Heart left ventricle (tissue), 16 donors: ENCODE measurements at regions of chr4 and their contacts with region 1.

Region 1: DNA sequence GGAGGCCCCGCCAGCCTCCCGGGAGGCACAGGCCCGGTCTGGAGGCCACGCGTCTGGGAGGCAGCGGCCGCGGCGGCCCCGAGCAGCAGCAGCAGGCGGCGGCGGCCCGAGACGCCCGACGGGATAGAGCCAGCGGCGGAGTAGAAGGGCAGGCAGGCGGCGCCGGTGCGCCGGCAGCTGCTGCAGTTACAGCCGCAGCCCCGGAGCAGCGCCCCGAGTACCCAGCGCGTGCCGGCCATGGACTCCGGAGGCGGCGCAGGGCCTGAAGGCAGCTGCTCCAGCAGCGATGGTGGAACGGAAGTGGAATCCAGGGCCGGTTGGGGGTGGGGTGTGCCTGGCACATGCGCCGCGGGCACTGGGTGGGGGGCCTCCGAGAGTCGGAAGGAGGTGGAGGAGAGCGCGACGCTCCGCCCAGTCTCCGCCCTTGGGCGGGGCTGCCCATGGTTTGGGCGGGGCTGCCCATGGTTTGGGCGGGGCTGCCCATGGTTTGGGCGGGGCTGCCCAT is at the start of gene GRSF1:
- DNase-seq: peak; percentile 95 to 98 (median 96)
- ATAC-seq: peak; percentile 96 to 99 (median 97)
- H3K4me3 ChIP-seq: peak within 1 kb of the TSS; percentile 58 to 100 (median 92)
- H3K27ac ChIP-seq: peak within 1 kb of the TSS; percentile 80 to 99 (median 96)
- H3K4me1 ChIP-seq: peaks cover 0 to 31% (median 19%) of the 10 kb centered on the region in 12 donors
- H3K27me3 ChIP-seq: no peaks in the 10 kb centered on the region
- CTCF ChIP-seq: peak in 4 of 12 donors; percentile 12 to 42 (median 26)
- POLR2A ChIP-seq: peak in 1 of 2 donors; percentile 62
- total RNA-seq, gene GRSF1: 70.7 to 114 (median 89.2) TPM

Region 2: GRCh38 chr4:69787879-69788278 is 1051.8 kb before region 1 on chr4:
- intact Hi-C with region 1: no loop called
- DNase-seq: no peak
- ATAC-seq: no peak
- H3K4me3 ChIP-seq: no peak overlapping the region
- H3K27ac ChIP-seq: no peak overlapping the region
- H3K4me1 ChIP-seq: no peaks in the 10 kb centered on the region
- H3K27me3 ChIP-seq: no peaks in the 10 kb centered on the region
- CTCF ChIP-seq: no peak
- POLR2A ChIP-seq: no peak

Region 3: DNA sequence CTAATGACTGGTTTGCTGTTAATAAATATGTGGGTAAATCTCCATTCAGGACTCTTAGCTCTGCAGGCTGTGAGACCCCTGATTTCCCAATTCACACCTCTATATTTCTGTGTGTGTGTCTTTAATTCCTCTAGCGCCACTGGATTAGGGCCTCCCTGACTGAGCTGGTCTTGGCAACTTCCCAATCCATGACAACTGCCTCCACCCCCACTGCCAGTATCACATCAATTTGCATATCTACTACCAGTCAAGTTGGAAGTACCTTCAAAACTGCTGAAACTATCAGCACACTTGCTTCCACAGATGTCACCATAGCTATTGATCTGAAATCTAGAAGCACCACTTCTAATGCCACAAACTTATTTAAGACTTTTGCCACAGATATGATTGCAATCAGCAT is 414.3 kb before region 1 on chr4:
- intact Hi-C with region 1: no loop called
- DNase-seq: no peak
- ATAC-seq: no peak
- H3K4me3 ChIP-seq: no peak overlapping the region
- H3K27ac ChIP-seq: no peak overlapping the region
- H3K4me1 ChIP-seq: no peaks in the 10 kb centered on the region
- H3K27me3 ChIP-seq: no peaks in the 10 kb centered on the region
- CTCF ChIP-seq: no peak
- POLR2A ChIP-seq: no peak

Region 4: DNA sequence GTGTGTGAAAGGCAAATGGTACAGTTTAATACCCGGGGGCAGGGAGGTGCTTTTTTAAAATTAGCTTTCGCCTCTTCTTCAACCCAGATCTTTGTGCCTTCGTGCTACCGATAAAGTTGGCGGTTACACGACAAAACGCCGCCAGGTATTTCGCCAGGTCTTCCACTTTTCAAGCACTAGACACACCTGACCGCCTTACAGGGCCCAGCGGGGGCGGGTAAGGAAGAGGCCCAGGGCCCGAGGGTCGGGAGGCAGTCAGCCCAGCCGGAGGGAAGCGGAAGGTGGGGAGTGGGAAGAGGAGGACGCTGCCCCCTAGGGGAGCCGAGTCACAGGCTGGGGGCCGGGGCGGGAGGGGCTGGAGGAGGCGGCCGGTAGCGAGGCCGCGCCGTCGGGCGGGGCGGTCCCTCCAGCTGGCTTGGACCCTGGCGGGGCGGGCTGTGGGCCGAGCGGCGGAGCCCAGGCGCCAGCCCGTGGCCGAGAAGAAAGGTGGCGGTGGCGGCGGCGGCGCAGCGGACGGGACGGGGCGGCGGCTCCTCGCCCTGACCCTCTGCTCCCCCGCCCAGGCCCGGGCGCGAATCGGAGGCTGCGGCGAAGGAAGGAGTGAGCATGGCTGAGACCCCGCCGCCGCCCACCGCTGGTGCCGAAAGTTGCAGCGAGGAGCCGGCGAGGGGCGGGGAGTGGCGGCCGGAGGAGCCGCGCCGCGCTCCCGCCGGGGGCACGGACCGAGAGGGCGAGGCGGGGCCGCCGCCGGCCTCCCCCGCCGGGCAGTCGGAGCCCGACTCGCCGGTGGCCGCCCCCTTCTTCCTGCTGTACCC is 135.1 kb before region 1 on chr4:
- intact Hi-C with region 1: loop called in 4 of 10 experiments (anchors 5 to 10 kb)
- DNase-seq: peak; percentile 89 to 91 (median 90)
- ATAC-seq: peak; percentile 83 to 94 (median 88)
- H3K4me3 ChIP-seq: peak overlapping the region; percentile 71 to 93 (median 84)
- H3K27ac ChIP-seq: peak overlapping the region; percentile 84 to 98 (median 95)
- H3K4me1 ChIP-seq: peaks cover 0 to 25% (median 15%) of the 10 kb centered on the region in 12 donors
- H3K27me3 ChIP-seq: no peaks in the 10 kb centered on the region
- CTCF ChIP-seq: peak in 8 of 12 donors; percentile 14 to 55 (median 42)
- POLR2A ChIP-seq: peak in 1 of 2 donors; percentile 51

Region 5: GRCh38 chr4:70783096-70783495 is 56.5 kb before region 1 on chr4:
- intact Hi-C with region 1: loop called in 1 of 10 experiments (anchors 10 kb)
- DNase-seq: no peak
- ATAC-seq: no peak
- H3K4me3 ChIP-seq: no peak overlapping the region
- H3K27ac ChIP-seq: no peak overlapping the region
- H3K4me1 ChIP-seq: peaks cover 0 to 9% (median 0%) of the 10 kb centered on the region in 12 donors
- H3K27me3 ChIP-seq: no peaks in the 10 kb centered on the region
- CTCF ChIP-seq: no peak
- POLR2A ChIP-seq: no peak

Region 6: DNA sequence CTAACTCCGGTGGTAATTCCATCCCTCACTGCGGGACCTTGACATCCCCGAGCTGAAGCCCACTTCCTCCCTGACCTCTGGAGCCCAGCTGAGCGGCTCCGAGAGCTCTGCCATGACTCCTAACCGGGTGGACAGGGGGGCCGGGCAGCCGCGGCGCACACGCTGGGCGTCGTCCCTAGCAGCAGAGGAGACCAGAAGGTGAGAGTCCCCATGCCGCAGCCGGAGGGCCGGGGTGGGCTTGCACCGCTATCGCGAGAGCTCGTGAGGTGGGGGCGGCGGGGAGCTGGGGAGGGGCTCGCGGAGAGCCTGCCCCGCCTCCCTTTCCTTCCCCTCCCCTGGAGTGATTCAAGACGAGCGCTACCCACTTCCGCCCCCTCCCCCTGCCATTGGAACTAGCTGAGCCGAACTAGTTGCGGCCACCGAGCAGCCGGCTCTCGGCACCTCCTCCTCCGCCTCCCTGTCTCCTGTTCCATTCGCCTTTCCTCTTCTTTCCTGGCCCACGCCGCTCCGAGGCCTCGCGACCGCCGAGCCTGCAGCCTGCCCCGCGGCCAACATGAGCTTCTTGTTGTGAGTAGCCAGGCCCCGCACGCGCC is 62.4 kb after region 1 on chr4 and contains the start of gene MOB1B:
- intact Hi-C with region 1: loop called in 9 of 10 experiments (anchors 1 to 10 kb)
- DNase-seq: peak; percentile 89 to 93 (median 93)
- ATAC-seq: peak; percentile 93 to 98 (median 98)
- H3K4me3 ChIP-seq: peak within 1 kb of the TSS; percentile 70 to 98 (median 84)
- H3K27ac ChIP-seq: peak within 1 kb of the TSS; percentile 75 to 94 (median 92)
- H3K4me1 ChIP-seq: peaks cover 0 to 26% (median 9%) of the 10 kb centered on the region in 12 donors
- H3K27me3 ChIP-seq: no peaks in the 10 kb centered on the region
- CTCF ChIP-seq: peak in 10 of 12 donors; percentile 10 to 65 (median 46)
- POLR2A ChIP-seq: peak in 1 of 2 donors; percentile 61
- total RNA-seq, gene MOB1B: 11.1 to 22.9 (median 18.6) TPM

Region 7: DNA sequence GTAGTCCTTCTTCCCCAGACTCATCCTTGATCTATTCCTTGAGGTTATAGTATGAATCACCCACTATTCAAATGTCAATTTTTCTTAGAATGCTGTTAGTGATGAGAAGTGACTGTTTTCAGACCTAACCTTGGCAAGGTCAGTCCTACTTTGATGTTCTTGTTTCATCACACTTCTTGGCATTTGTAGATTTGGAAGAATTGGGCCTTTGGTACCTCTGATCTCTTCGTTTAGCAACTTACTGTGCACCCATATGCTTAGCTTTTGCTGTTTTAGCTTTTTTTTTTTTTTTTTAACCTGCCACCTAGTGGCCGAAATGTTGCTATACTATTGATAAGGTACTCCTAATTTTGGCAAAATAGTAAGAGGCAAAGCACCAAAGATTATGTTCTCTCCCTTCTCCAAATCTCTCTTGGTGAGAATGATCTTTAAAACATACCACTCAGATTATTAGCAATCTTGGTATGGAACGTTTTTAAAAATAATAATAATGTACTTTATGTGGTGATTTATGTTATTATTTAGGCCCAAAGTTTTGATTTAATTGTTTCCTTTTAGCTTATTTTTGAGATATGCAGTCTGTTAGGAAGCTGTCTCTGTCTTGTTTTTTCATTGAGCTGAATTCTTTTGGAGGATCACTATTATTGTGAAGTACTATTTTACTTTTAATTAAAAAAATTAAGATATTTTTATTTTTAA is 170.4 kb after region 1 on chr4:
- intact Hi-C with region 1: loop called in 1 of 10 experiments (anchors 5 kb)
- DNase-seq: no peak
- ATAC-seq: peak in 1 of 4 donors; percentile 56
- H3K4me3 ChIP-seq: no peak overlapping the region
- H3K27ac ChIP-seq: no peak overlapping the region
- H3K4me1 ChIP-seq: peaks cover 0 to 18% (median 0%) of the 10 kb centered on the region in 12 donors
- H3K27me3 ChIP-seq: no peaks in the 10 kb centered on the region
- CTCF ChIP-seq: peak; percentile 57 to 79 (median 64)
- POLR2A ChIP-seq: no peak